ENCODE measurements at regions of chr18 and their contacts with region 1.

Region 1: DNA sequence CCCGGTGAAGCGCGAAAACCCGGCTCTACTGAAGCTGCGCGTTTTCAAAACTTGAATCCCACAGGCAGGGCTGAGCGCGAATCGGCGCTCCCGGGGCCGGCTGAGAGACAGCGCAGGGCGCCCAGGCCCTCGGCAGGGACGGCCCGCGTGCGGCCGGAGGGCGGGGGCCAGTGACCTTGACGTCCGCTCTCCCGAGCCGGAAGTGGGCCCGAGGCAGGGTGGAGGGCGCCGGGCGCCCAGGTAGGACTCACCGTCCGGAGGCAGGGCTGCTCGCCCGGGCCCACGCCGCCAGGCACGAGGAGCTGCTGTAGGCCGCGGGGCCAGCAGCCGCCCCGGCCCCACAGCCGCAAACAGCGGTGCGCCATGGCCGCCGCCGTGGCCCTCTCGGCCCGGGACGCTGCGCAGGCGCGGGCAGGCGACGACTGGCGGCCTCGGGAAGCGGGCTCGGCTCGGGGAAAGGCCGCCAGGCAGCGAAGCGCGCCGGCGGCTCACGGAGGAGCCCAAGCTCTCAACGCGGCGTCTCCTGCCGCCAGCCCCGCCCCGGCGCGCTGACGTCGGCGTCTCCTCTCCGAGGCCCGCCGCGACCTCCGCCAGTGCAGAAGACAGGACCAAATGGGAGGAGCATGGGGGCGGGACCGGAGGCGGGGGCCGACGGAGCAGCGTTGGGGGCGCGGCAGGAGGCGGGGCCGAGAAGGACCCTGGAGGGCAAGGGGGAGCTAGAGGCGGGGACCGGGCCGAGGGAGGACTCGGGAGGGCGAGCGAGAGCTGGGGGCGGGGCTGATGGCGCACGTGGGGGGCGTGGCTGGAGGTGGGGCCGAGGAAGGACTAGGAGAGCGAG is at the start of gene AFG3L2:
- DNase-seq: peak; percentile 100
- total RNA-seq, gene AFG3L2: 110 TPM

Region 2: DNA sequence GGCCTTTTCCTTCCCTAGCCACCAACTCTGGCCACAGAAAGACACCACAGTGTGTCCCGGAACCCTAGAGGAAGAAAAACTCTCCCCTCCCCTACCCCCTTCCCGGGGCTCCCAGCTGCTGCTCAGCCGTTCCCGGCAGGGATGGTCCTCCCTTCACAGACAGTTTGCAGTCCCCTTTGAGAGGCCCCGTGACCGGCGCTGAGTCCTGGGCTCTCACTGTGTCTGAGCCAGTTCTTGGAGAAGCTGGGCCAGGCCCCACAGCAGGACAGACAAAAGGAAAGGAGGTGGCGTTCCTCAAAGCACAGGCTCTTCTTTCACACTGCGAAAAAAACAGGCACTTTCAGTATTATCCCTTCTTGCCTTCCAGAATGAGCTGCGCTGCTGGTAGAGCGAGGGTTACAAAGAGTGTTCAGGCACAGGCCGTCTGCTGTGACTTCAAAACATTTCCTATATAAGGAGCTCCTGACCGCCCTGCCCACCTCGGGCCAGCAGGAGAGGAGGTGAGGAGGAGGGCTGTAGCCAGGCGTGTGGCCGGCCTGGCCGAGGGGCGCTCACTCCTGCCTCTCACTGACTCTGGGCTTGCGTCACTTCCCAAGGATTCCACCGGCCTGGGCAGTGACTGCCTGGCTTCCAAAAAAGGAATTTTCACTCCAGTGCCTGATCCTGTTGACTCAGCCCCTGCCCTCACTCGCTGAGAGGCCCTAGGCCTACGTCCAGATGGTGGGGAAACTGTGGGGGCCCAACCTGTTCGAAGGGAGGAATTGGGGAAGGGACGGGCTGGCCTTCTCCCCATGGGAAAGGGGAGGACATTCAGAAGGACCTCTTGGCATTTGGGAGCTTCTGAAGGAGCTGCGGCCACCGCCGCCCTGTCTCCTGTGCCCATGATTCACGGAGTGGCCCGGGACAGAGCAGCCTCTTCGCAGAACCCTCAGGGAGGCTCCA is 97.9 kb before region 1 on chr18:
- intact Hi-C with region 1: loop called (anchors 2 kb)
- DNase-seq: peak; percentile 94

Region 3: DNA sequence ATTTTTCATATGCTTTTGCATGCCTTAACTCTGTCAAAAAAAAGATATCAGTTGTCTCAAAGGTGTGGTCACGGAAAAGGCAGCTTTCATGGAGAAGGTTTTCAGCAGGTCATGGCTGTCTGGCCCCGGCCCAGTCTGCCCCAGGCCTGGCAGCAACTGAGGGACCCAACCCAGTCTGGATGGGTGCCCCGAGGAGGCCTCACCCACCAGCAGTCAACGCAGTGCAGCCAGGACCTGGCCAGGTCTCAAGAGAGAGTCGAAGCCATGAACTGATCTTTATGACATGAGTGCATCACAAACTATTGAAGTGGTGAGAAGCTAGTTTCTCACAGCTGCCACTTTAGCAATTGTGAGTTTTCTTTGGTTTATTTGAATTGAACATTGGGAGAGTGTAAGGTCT is 61.0 kb before region 1 on chr18:
- intact Hi-C with region 1: no loop called
- DNase-seq: peak; percentile 78

Region 4: DNA sequence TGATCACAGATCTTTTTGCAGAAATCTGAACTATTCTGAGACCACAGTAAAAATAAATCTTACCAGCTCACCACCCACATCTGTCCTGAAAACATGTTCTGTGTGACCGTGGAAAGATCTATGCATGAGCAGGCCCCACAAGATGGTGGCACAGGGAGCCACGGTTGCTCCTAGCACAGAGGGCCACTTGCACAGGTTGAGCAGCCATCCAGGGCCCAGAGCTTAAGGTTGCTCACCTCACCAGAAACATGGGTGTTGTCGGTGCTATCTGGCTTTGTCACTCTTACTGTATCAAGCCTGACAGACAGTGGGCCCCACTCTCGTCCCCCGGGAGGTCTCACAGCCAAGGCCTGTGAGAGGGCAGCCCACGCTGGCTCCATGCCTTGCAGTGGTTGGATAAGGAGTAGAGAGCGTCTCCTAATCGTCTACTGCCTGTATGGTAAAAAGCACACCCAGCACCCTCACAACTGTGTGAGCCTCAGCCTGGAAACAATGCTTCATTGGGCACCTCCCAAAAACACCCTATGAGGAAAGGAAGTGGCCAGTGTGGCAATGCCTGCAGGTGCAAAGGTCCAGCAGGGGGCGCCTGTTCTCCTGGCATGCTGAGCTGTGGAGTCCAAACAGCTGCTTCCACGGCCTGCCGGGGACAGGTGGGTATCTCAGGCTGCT is 49.3 kb before region 1 on chr18:
- intact Hi-C with region 1: loop called (anchors 5 kb)
- DNase-seq: peak; percentile 91

Region 5: DNA sequence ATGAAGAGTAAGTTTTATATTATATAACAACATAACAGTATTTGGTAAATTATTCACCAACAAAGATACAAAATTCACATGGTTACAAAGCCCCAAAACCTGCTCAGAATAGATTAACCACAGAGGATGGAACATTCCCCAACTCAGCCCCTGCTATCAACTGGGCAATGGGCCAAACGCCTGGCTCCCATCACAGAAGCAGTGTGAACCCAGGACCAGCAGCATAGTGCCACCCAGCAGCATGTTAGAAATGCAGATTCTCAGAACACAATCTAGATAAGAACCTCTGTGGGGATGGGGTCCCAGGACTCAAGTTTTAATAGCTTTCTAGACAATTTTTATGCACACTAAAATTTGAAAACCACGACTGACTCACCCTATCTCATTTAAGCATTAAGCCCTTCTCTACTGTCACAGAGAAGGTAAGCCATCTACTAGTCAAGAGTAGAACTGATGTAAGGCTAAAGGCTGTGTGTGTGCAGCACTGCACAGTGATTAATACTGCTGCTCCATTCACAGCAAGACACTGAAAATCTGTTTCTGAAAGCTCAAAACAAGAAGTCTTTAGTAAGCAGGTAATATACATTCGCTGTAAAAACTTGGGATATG is 15.1 kb before region 1 on chr18:
- intact Hi-C with region 1: loop called (anchors 1 kb)
- DNase-seq: no peak

Region 6: GRCh38 chr18:12455496-12455895 is 78.6 kb after region 1 on chr18:
- intact Hi-C with region 1: no loop called
- DNase-seq: no peak

Region 7: GRCh38 chr18:12531749-12532148 is 154.8 kb after region 1 on chr18:
- intact Hi-C with region 1: no loop called
- DNase-seq: no peak

Region 8: DNA sequence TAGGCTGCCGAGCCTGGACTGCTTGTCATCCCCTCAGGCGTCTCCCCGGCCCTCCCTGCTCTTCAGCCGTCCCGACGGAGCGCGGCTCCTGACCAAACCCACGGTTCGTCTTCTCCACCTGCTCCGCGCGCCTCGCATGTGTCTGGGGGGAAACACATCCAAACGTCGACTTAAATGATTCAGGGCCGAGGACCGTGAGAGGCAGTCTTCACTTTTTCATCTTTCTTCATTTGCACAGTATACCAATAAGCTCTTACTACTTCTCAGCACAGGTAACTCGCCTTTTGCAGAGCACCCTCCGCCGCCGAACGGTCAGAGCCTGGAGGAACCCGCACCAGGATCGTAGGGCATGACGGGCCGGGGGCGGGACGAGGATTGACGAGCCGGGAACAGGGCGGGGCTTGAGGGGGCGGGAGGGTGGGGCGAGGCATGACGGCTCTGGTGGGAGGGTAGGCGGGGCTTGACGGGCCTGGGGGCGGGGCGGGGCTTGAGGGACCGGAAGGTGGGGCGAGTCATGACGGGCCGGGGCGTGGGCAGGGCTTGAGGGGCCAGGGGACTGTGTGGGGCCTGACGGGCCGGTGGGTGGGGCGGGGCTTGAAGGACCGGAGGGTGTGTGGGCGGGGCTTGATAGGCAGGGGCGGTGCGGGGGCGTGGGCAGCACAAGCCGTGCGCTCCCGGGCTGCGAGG is 570.6 kb after region 1 on chr18 and contains the start of gene SEH1L:
- intact Hi-C with region 1: loop called (anchors 2 kb)
- DNase-seq: peak; percentile 100
- total RNA-seq, gene SEH1L: 21.0 TPM

Measured in cardiac septum (tissue), 1 donor.